Heart left ventricle (tissue), 16 donors: ENCODE measurements at regions of chr9 and their contacts with region 1.

Region 1: DNA sequence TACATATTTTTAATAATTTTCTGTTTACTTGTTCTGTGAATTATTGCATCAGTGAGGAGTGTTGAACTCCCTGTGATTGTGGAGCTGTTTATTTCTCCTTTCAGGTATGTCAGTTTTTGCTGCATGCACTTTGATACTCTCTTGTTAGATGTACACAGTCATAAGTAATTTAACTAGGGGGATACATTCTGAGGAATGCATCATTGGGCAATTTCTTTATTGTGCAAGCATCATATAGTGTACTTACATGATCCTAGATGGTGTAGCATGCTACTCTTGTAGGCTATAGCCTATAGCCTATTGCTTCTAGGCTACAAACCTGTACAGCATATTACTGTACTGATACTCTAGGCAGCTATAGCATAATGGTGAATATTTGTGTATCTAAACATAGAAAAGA is 9.5 kb downstream of the DENND4C start:
- DNase-seq: no peak
- ATAC-seq: no peak
- H3K4me3 ChIP-seq: no peak overlapping the region
- H3K27ac ChIP-seq: no peak overlapping the region
- H3K4me1 ChIP-seq: peaks cover 0 to 37% (median 13%) of the 10 kb centered on the region in 12 donors
- H3K27me3 ChIP-seq: no peaks in the 10 kb centered on the region
- CTCF ChIP-seq: no peak
- POLR2A ChIP-seq: no peak

Region 2: GRCh38 chr9:19085295-19085694 is 154.7 kb before region 1 on chr9:
- intact Hi-C with region 1: no loop called
- DNase-seq: no peak
- ATAC-seq: no peak
- H3K4me3 ChIP-seq: no peak overlapping the region
- H3K27ac ChIP-seq: no peak overlapping the region
- H3K4me1 ChIP-seq: no peaks in the 10 kb centered on the region
- H3K27me3 ChIP-seq: no peaks in the 10 kb centered on the region
- CTCF ChIP-seq: peak in 9 of 12 donors; percentile 7 to 40 (median 29)
- POLR2A ChIP-seq: no peak

Region 3: DNA sequence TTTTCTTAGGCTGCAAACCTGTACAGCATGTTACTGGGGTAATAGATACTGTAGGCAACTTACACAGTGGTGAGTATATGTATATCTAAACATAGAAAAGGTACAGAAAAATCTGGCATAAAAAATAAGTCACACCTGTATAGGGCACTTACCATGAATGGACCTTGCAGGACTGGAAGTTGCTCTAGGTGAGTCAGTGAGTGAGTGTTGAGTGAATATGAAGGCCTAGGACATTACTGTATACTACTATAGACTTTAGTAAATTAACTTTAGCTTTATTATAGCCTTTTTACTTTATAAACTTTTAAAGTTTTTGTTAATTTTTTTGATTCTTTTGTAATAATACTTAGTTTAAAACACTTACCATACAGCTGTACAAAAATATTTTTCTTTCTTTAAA is 41.8 kb after region 1 on chr9:
- intact Hi-C with region 1: loop called in 1 of 10 experiments (anchors 5 kb)
- DNase-seq: no peak
- ATAC-seq: no peak
- H3K4me3 ChIP-seq: no peak overlapping the region
- H3K27ac ChIP-seq: no peak overlapping the region
- H3K4me1 ChIP-seq: peaks cover 0 to 26% (median 12%) of the 10 kb centered on the region in 12 donors
- H3K27me3 ChIP-seq: no peaks in the 10 kb centered on the region
- CTCF ChIP-seq: no peak
- POLR2A ChIP-seq: no peak

Region 4: DNA sequence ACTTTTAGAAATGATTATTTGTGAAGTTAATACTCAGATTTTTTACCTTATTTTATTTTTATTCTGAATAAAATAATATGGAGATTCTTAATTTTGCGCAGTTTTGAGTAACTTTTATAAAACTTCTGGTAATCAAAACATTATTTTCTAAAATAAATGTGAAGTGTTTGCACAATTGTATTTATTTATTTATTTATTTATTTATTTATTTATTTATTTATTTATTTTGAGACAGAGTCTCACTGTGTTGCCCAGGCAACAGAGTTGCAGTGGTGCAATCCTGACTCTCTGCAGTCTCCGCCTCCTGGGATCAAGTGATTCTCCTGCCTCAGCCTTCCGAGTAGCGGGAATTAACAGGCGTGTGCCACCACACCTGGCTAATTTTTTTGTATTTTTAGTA is 66.6 kb after region 1 on chr9:
- intact Hi-C with region 1: loop called in 1 of 10 experiments (anchors 10 kb)
- DNase-seq: no peak
- ATAC-seq: no peak
- H3K4me3 ChIP-seq: no peak overlapping the region
- H3K27ac ChIP-seq: no peak overlapping the region
- H3K4me1 ChIP-seq: no peaks in the 10 kb centered on the region
- H3K27me3 ChIP-seq: no peaks in the 10 kb centered on the region
- CTCF ChIP-seq: no peak
- POLR2A ChIP-seq: no peak

Region 5: DNA sequence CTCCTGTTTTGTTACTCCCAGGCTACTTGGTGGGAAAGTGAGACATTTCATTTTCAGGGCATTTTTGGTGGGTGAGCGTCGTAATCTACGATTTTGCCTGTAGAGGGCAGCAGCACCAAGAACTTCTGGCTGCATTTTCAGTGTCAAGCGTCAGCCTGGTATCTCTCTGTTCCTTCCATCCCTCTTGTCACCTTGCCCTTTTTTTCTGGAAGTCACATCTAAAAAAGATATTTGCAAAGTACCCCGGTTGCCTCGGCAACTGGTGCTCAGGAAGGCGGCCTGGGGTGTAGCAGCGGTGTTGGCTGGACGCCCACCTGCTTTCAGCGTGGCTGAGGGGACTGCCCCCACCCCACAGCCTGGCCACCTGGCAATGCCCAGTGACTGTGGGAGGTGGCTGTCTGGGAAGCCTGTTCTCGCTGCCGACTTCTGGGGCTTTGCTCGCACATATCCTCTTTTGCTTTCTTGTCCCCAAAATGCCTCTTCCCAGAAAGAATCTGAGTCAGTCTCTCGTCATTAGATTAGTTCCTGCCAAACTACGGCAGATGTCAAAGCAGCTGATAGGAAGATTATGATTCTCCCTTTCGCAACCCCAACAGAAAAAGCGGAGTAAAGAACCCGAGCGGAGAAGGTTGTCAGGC is 253.3 kb after region 1 on chr9:
- intact Hi-C with region 1: no loop called
- DNase-seq: peak; percentile 56 to 90 (median 86)
- ATAC-seq: peak; percentile 75 to 91 (median 90)
- H3K4me3 ChIP-seq: peak overlapping the region in 9 of 12 donors; percentile 19 to 50 (median 39)
- H3K27ac ChIP-seq: peak overlapping the region; percentile 3 to 79 (median 40)
- H3K4me1 ChIP-seq: peaks cover 0 to 16% (median 4%) of the 10 kb centered on the region in 12 donors
- H3K27me3 ChIP-seq: no peaks in the 10 kb centered on the region
- CTCF ChIP-seq: peak; percentile 57 to 85 (median 72)
- POLR2A ChIP-seq: no peak